ENCODE measurements at regions of chr9 and their contacts with region 1.

Region 1: GRCh38 chr9:121322037-121322775 is 47.8 kb downstream of the STOM start:
- DNase-seq: no peak
- ATAC-seq: peak; percentile 34
- H3K4me3 ChIP-seq: no peak overlapping the region
- H3K27ac ChIP-seq: peak overlapping the region; percentile 79
- H3K4me1 ChIP-seq: peaks cover 54% of the 10 kb centered on the region
- H3K27me3 ChIP-seq: no peaks in the 10 kb centered on the region
- CTCF ChIP-seq: no peak

Region 2: GRCh38 chr9:120308495-120308894 is 1013.7 kb before region 1 on chr9:
- intact Hi-C with region 1: no loop called
- DNase-seq: no peak
- ATAC-seq: no peak
- H3K4me3 ChIP-seq: no peak overlapping the region
- H3K27ac ChIP-seq: no peak overlapping the region
- H3K4me1 ChIP-seq: no peaks in the 10 kb centered on the region
- H3K27me3 ChIP-seq: no peaks in the 10 kb centered on the region
- CTCF ChIP-seq: no peak

Region 3: DNA sequence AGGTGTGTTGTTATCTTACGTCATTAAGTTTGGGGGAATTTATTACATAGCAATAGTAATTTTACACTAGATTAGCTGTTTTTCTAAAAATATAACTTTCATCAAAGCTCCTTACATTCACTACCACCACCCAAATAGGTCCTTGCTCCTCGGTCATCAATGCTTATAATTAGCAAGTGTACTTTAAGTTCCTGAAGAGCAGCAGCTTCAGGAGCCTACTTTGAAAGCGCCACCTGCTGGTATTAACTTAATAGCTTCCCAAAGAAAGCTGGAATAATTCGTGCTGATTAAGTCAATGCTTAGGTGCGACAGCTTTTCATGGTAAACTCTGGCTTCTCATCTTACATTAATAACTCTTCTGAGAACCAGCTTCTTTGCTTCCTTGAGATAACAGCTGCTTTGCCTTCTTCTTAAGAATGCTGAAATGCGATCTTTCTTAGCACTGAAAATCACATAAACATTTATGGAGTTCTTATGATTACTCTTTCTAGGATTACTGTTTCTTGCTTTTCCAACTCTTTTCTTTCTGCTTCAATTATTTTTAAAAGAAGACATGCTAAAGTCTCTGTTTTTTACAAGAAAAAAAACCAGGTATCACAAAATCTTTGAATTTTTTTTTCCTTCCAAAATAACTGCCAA is 262.1 kb before region 1 on chr9:
- intact Hi-C with region 1: no loop called
- DNase-seq: no peak
- ATAC-seq: peak; percentile 83
- H3K4me3 ChIP-seq: no peak overlapping the region
- H3K27ac ChIP-seq: no peak overlapping the region
- H3K4me1 ChIP-seq: no peaks in the 10 kb centered on the region
- H3K27me3 ChIP-seq: no peaks in the 10 kb centered on the region
- CTCF ChIP-seq: peak; percentile 73

Region 4: DNA sequence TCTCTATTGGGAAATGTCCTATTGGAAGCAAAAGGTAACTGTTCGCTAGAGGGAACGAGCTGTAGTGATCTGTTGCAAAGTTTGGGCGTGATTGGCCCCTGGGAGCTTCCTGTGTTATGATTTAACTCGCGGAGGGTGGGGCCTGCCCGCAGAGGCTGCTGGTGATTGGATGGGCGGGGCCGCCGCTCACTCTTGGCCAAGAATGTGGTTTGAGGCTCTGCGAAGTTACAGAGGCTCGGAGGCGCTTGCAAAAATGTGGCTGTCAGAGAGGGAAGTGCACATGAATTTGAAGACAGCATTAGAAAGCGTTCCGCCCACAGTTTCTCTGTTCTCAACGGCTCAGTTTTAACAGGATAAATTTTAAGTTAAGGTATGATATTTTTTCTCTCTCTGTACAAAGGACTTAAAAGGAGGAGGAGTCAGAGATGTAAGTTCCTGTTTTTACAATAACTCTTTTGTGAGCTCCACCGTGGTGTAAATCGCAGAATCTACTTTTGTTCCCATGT is 200.6 kb before region 1 on chr9:
- intact Hi-C with region 1: no loop called
- DNase-seq: peak; percentile 98
- ATAC-seq: peak; percentile 100
- H3K4me3 ChIP-seq: peak overlapping the region; percentile 53
- H3K27ac ChIP-seq: peak overlapping the region; percentile 37
- H3K4me1 ChIP-seq: peaks cover 13% of the 10 kb centered on the region
- H3K27me3 ChIP-seq: no peaks in the 10 kb centered on the region
- CTCF ChIP-seq: peak; percentile 40

Region 5: DNA sequence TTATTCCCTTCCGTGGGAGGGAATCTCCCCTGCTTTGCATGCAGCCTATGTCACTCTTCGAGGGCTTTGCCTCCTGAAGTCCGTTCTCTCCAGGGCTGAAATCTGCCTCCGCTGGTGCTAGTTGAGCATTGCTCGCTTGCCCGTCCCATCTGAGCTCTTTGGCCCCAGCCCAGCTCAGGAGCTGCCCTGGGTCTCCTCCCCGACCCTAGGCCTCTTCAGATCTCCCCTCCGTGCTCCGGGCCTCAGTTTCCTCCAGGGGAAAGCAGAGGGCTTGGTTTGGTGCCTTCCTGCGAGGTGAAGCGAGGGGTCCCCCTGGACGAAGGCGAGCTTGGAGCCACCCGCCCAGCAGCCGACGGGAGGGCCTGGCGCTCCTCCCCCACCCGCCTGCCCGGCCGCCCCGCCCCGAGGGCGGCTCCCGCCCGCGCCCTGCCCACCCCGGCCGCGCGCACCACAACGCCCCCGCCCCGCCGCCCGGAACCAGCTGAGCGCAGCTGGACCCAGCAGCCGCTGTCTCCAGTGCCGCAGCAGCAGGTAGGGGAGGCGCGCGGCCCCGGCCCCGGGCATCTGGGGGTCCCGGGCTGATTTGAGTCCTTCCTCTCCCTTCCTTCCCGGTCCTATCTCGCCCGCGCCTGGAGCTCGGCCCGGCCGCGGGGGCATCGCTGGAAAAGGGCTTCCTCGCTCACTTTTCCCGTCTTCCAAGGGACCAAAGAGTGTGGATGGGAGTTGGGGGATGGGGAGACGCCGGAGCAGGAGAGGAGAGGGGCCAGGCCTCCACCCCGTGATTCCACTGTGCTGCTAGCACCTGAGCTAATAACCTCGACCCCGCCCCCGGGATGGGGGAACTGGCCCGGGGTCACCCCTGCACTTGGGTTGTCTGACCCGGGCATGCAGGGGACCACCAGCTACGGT is 54.3 kb before region 1 on chr9 and contains the start of gene GSN:
- intact Hi-C with region 1: no loop called
- DNase-seq: peak; percentile 94
- ATAC-seq: peak; percentile 93
- H3K4me3 ChIP-seq: peak within 1 kb of the TSS; percentile 62
- H3K27ac ChIP-seq: peak within 1 kb of the TSS; percentile 70
- H3K4me1 ChIP-seq: peaks cover 28% of the 10 kb centered on the region
- H3K27me3 ChIP-seq: no peaks in the 10 kb centered on the region
- CTCF ChIP-seq: peak; percentile 27
- total RNA-seq, gene GSN: 464 TPM

Region 6: GRCh38 chr9:121383715-121384114 is 61.5 kb after region 1 on chr9:
- intact Hi-C with region 1: loop called (anchors 10 kb)
- DNase-seq: no peak
- ATAC-seq: no peak
- H3K4me3 ChIP-seq: no peak overlapping the region
- H3K27ac ChIP-seq: no peak overlapping the region
- H3K4me1 ChIP-seq: no peaks in the 10 kb centered on the region
- H3K27me3 ChIP-seq: no peaks in the 10 kb centered on the region
- CTCF ChIP-seq: no peak

Region 7: GRCh38 chr9:121399883-121400607 is 77.8 kb after region 1 on chr9:
- intact Hi-C with region 1: loop called (anchors 5 kb)
- DNase-seq: no peak
- ATAC-seq: peak; percentile 87
- H3K4me3 ChIP-seq: no peak overlapping the region
- H3K27ac ChIP-seq: no peak overlapping the region
- H3K4me1 ChIP-seq: no peaks in the 10 kb centered on the region
- H3K27me3 ChIP-seq: no peaks in the 10 kb centered on the region
- CTCF ChIP-seq: peak; percentile 70

Measured in upper lobe of right lung (tissue), 1 donor.